ENCODE measurements at regions of chr20 and their contacts with region 1.

Region 1: GRCh38 chr20:36591854-36592641 is 13.5 kb upstream of the RAB5IF start:
- DNase-seq: no peak
- H3K4me3 ChIP-seq: no peak overlapping the region
- H3K27ac ChIP-seq: no peak overlapping the region
- H3K4me1 ChIP-seq: no peaks in the 10 kb centered on the region
- H3K27me3 ChIP-seq: no peaks in the 10 kb centered on the region
- CTCF ChIP-seq: peak in 3 of 4 experiments; percentile 13 to 39 (median 14)
- EP300 ChIP-seq: no peak
- POLR2A ChIP-seq: no peak

Region 2: DNA sequence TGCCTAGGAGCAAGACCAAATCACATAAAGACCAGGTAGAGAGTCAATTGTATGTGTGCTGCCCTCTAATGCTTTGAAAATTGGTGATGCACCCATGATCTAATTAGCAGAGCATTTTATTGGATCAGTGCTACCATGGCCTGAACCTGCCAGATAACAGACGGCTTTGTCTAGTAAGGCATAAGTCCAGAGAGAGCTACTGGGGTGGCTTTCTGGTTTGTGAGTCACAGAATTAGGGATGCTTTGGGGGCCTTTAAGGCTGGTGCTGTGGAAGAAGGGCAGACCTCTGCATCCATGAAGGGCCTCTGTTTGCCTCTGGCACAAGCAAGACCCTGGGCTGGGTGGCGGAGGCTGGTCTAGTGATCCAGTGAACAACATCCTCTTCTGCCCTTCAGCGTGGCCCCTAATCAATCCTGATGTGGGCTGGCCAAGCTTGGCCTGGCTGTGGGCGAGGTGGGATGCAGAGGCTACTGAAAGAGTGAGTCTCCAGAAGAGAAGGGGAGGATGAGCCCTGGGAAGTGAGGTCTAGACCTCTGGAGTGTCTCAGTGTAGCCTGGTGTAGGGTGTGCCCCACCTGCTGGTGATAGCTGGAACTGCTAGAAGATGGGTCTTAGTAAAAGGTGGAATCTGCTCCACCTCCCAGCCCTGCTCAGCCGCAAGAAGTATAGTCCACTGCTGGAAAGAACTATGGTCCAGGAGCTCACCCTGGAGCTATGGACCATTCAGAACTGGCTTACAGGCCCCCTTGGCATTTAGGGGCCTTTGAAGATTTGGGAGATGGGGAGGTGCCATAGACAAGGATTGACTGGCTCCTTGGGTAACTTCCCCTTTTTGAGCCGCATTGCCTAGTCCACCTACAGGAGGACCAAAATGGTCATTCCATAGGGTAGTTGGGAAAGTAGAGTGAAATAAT is 392.4 kb before region 1 on chr20:
- intact Hi-C with region 1: no loop called
- DNase-seq: peak; percentile 87
- H3K4me3 ChIP-seq: no peak overlapping the region
- H3K27ac ChIP-seq: no peak overlapping the region
- H3K4me1 ChIP-seq: no peaks in the 10 kb centered on the region
- H3K27me3 ChIP-seq: no peaks in the 10 kb centered on the region
- CTCF ChIP-seq: peak; percentile 68 to 92 (median 86)
- EP300 ChIP-seq: no peak
- POLR2A ChIP-seq: no peak

Region 3: GRCh38 chr20:36550797-36551299 is 41.2 kb before region 1 on chr20:
- intact Hi-C with region 1: loop called (anchors 5 kb)
- DNase-seq: peak; percentile 87
- H3K4me3 ChIP-seq: no peak overlapping the region
- H3K27ac ChIP-seq: peak overlapping the region; percentile 70 to 100 (median 99)
- H3K4me1 ChIP-seq: peaks cover 2 to 49% (median 28%) of the 10 kb centered on the region in 4 donors
- H3K27me3 ChIP-seq: no peaks in the 10 kb centered on the region
- CTCF ChIP-seq: no peak
- EP300 ChIP-seq: no peak
- POLR2A ChIP-seq: no peak